ENCODE measurements at regions of chr5 and their contacts with region 1.

Region 1: DNA sequence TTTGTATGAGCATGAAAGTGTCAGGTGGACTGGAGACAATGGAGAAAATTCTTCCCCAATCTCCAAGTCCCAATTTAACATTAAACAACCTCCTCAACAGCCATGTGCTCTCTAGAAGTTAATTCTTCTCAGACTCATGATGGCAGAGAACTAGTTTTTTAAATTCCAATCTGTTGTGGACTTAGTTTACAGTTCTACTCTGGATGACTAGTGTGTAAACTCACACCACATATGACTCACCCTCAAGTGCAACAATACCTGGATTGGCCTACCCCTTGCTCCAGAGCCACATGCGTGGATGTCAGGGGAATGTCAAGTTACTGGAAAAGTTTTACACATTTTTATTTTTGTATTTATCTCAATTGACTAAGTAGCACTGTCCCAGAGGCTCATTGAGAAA is 135.9 kb upstream of the EFNA5 start:
- DNase-seq: peak; percentile 66
- ATAC-seq: peak; percentile 95
- H3K4me3 ChIP-seq: no peak overlapping the region
- H3K27ac ChIP-seq: no peak overlapping the region
- H3K4me1 ChIP-seq: peaks cover 7% of the 10 kb centered on the region
- H3K27me3 ChIP-seq: no peaks in the 10 kb centered on the region
- CTCF ChIP-seq: no peak

Region 2: GRCh38 chr5:107518190-107518589 is 288.5 kb before region 1 on chr5:
- CTCF ChIA-PET with region 1: no interaction called
- POLR2A ChIA-PET with region 1: interaction called, 29 read pairs
- in situ Hi-C with region 1: no loop called
- intact Hi-C with region 1: no loop called
- DNase-seq: no peak
- ATAC-seq: no peak
- H3K4me3 ChIP-seq: no peak overlapping the region
- H3K27ac ChIP-seq: no peak overlapping the region
- H3K4me1 ChIP-seq: peaks cover 12% of the 10 kb centered on the region
- H3K27me3 ChIP-seq: no peaks in the 10 kb centered on the region
- CTCF ChIP-seq: no peak

Region 3: GRCh38 chr5:108670591-108671289 is 864.1 kb after region 1 on chr5:
- CTCF ChIA-PET with region 1: no interaction called
- POLR2A ChIA-PET with region 1: no interaction called
- in situ Hi-C with region 1: no loop called
- intact Hi-C with region 1: no loop called
- DNase-seq: no peak
- ATAC-seq: no peak
- H3K4me3 ChIP-seq: no peak overlapping the region
- H3K27ac ChIP-seq: no peak overlapping the region
- H3K4me1 ChIP-seq: no peaks in the 10 kb centered on the region
- H3K27me3 ChIP-seq: peaks cover 6% of the 10 kb centered on the region; the same call in 1 of the 2 replicates
- CTCF ChIP-seq: no peak

Measured in Panc1 (cell line).